Left cardiac atrium (tissue), 4 donors: ENCODE measurements at regions of chr11 and their contacts with region 1.

Region 1: DNA sequence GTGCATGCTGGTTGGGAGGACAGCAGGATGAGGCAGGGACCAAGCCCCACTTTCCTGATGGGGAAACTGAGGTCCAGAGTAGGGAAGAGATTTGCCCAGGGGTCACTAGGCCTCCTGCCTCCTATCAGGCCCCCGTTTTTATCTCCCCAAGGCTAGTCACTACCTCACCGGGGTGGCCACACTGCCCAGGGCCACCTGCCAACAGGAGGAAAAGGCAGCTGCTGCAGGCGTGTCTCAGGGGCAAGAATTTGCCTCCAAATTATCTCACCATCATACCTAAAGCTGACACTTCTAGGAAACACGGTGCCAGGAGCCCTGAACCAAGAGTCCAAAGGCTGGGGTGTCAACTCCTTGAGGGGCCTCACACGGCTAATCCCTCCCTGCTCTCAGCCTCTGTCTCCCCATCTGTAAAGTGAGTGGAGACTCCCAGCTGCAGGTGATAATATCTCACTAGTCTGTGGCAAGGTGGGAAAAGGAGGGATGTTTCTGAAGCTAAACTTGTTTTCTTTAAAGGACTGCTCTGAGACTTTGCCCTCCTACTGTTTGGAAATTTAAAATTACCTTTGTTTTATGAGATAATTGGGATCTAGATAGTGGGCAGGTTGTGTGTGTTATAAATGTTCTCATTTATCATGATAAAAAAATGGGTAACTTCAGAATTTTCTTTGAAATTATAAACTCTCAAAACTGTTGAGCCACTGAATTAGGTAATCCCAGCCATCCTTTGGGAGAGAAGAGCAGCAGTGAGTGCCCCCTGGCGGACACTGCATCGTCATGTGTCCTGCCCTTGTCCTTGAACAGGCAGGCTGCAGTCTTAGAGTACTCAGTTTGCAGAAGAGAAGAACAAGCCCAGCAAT is 60.0 kb downstream of the MYO7A start:
- DNase-seq: peak; percentile 88
- ATAC-seq: peak; percentile 79 to 93

Region 2: GRCh38 chr11:77047007-77047927 is 140.7 kb before region 1 on chr11:
- intact Hi-C with region 1: loop called in 1 of 2 experiments (anchors 5 kb)
- DNase-seq: peak; percentile 74
- ATAC-seq: peak; percentile 95 to 96

Region 3: GRCh38 chr11:77127232-77127911 is 60.6 kb before region 1 on chr11:
- intact Hi-C with region 1: loop called (anchors 2 to 5 kb)
- DNase-seq: peak; percentile 58
- ATAC-seq: peak; percentile 65 to 75